ENCODE measurements at regions of chr2 and their contacts with region 1.

Region 1: DNA sequence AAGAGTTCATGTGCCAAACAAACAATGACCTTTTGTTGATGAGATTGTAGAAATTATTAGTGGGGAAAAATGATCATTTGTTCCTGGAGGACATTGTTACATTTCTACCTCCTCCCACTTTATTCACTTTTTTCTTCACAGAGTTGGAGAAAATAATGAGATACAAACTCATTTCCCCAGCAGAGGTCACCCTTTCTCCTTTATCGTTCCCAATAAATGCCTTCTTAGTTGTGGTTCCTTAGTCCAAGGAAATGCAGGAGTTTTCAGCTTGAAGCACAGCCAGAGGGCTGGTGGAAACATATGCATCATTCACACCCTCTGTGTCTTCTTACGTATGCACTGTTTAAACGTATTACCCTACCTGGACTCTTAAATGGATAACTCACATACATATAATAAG is 108.8 kb downstream of the SLC4A3 start:
- DNase-seq: no peak
- ATAC-seq: no peak
- H3K4me3 Mint-ChIP-seq: no peak overlapping the region
- H3K27ac Mint-ChIP-seq: no peak overlapping the region
- H3K4me1 Mint-ChIP-seq: no peaks in the 10 kb centered on the region
- H3K27me3 Mint-ChIP-seq: peaks cover 12% of the 10 kb centered on the region

Region 2: DNA sequence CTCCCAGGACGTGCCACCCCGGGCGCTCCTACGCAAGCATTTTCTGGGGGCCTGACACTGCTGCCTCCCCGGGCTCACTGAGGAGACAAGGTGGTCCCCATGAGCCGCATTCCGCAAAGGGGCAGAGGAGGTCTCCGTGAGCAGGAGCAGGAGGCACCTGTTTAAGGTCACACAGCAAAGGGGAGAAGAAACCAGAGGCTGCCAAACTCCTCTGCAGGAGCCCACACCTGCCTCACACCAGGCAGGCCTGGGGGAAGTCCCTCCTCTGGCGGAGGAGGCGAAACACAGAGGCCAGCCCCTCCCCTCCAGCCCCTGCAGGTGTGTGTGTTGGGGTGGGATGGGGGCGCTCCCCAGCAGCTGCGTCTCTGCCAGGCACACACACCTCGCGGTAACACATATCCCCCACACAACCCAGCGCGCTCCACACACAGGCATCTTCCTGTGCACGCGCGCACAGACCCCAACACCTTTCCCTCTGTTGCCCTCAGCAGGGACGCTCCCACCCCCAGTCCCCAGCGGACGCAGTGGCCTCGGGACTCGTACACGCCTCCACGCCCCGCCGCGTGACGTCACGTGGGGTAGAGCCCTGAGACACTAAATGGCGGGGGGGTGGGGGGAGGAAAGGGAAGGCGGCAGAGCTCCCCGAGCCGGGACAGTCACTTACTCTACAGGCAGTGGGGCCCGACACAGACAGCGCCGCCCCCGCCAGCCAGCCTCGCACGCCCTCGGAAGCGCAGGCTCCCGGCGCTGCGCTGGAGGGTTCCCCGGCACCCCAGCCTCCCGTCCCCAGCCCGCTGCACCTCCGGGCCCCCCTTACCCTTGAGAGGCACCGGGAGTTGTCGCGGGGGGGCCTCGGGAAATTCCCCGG is 856.1 kb before region 1 on chr2:
- CTCF ChIA-PET with region 1: no interaction called
- POLR2A ChIA-PET with region 1: no interaction called
- intact Hi-C with region 1: no loop called
- DNase-seq: peak; percentile 82
- ATAC-seq: peak; percentile 78
- H3K4me3 Mint-ChIP-seq: peak overlapping the region; percentile 73
- H3K27ac Mint-ChIP-seq: peak overlapping the region; percentile 74
- H3K4me1 Mint-ChIP-seq: peaks cover 49% of the 10 kb centered on the region
- H3K27me3 Mint-ChIP-seq: peaks cover 28% of the 10 kb centered on the region

Region 3: GRCh38 chr2:219997341-219997851 is 261.2 kb after region 1 on chr2:
- CTCF ChIA-PET with region 1: no interaction called
- POLR2A ChIA-PET with region 1: no interaction called
- intact Hi-C with region 1: loop called in 1 of 2 experiments (anchors 5 kb)
- DNase-seq: peak; percentile 57
- ATAC-seq: no peak
- H3K4me3 Mint-ChIP-seq: no peak overlapping the region
- H3K27ac Mint-ChIP-seq: no peak overlapping the region
- H3K4me1 Mint-ChIP-seq: no peaks in the 10 kb centered on the region
- H3K27me3 Mint-ChIP-seq: no peaks in the 10 kb centered on the region

Measured in activated CD4-positive, alpha-beta T cell treated with anti-CD3 and anti-CD28 coated beads for 36 hours (primary cell).